H1 (cell line): ENCODE measurements at regions of chr6 and their contacts with region 1.

Region 1: GRCh38 chr6:27809939-27810767 is 102.0 kb downstream of the OR2B2 start:
- DNase-seq: peak in 1 of 2 experiments; percentile 78
- H3K4me3 ChIP-seq: peak overlapping the region; percentile 78 to 96 (median 89)
- H3K27ac ChIP-seq: peak overlapping the region; percentile 84
- H3K4me1 ChIP-seq: peaks cover 0 to 6% (median 3%) of the 10 kb centered on the region in 4 experiments; a peak in 4 of 7 replicates
- H3K27me3 ChIP-seq: no peaks in the 10 kb centered on the region
- CTCF ChIP-seq: peak in 1 of 3 experiments; percentile 6; a peak in 1 of 4 replicates
- EP300 ChIP-seq: no peak
- POLR2A ChIP-seq: peak; percentile 98 to 100
- RAD21 ChIP-seq: no peak

Region 2: GRCh38 chr6:26031595-26032339 is 1778.4 kb before region 1 on chr6:
- CTCF ChIA-PET with region 1: no interaction called
- POLR2A ChIA-PET with region 1: interaction called, 81 read pairs
- DNase-seq: peak; percentile 82 to 88
- H3K4me3 ChIP-seq: peak overlapping the region; percentile 81 to 95 (median 92)
- H3K27ac ChIP-seq: peak overlapping the region; percentile 96
- H3K4me1 ChIP-seq: peaks cover 2 to 18% (median 13%) of the 10 kb centered on the region in 4 experiments; a peak in 5 of 7 replicates
- H3K27me3 ChIP-seq: no peaks in the 10 kb centered on the region
- CTCF ChIP-seq: no peak
- EP300 ChIP-seq: peak in 1 of 2 experiments; percentile 2; a peak in 1 of 3 replicates
- POLR2A ChIP-seq: peak; percentile 99 to 100
- RAD21 ChIP-seq: no peak

Region 3: DNA sequence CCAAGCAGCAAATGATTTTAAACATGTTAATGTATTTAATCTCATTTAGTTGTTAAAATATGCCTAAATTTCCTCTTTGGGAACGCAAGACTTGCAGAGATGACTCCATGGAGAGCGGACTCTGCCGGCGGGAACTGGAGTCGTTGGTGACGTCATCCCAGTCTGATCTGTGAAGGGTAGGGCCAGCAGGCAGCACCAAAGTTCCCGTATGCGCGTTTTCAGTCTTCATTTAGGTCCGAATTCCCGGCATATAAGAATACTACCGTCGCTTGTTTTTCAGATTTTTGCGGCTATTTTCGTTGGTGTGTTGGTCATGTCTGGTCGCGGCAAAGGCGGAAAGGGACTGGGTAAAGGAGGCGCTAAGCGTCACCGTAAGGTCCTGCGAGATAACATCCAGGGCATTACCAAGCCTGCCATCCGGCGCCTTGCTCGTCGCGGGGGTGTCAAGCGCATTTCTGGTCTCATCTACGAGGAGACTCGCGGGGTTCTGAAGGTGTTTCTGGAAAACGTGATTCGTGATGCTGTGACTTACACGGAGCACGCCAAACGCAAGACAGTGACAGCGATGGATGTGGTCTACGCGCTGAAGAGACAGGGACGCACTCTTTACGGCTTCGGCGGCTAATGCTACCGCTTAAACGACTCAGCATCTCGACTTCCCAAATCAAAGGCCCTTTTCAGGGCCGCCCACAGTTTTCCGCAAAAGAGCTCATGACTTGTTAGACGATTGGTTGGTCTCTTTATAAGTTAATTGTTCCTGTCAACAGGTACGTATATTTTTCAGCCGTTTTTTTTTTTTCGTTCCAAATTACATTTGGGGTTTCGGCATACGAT is 1605.6 kb before region 1 on chr6:
- CTCF ChIA-PET with region 1: no interaction called
- POLR2A ChIA-PET with region 1: interaction called, 79 read pairs
- DNase-seq: peak; percentile 88 to 97
- H3K4me3 ChIP-seq: peak overlapping the region; percentile 64 to 94 (median 82)
- H3K27ac ChIP-seq: peak overlapping the region; percentile 98
- H3K4me1 ChIP-seq: peaks cover 0 to 15% (median 5%) of the 10 kb centered on the region in 4 experiments; a peak in 6 of 7 replicates
- H3K27me3 ChIP-seq: no peaks in the 10 kb centered on the region
- CTCF ChIP-seq: peak in 1 of 3 experiments; percentile 18; a peak in 1 of 4 replicates
- EP300 ChIP-seq: peak; percentile 13 to 95; a peak in 2 of 3 replicates
- POLR2A ChIP-seq: peak; percentile 99 to 100
- RAD21 ChIP-seq: 0 out of 4 replicates have a peak, but pooled peaks of 1 of the 2 experiments have one; percentile 14

Region 4: GRCh38 chr6:26234421-26235296 is 1575.5 kb before region 1 on chr6:
- CTCF ChIA-PET with region 1: no interaction called
- POLR2A ChIA-PET with region 1: interaction called, 12 read pairs
- DNase-seq: peak in 1 of 2 experiments; percentile 85
- H3K4me3 ChIP-seq: peak overlapping the region; percentile 83 to 91 (median 88)
- H3K27ac ChIP-seq: peak overlapping the region; percentile 93
- H3K4me1 ChIP-seq: peaks cover 0 to 3% (median 0%) of the 10 kb centered on the region in 4 experiments; a peak in 3 of 7 replicates
- H3K27me3 ChIP-seq: no peaks in the 10 kb centered on the region
- CTCF ChIP-seq: no peak
- EP300 ChIP-seq: no peak
- POLR2A ChIP-seq: peak; percentile 86
- RAD21 ChIP-seq: no peak

Region 5: GRCh38 chr6:27146706-27147505 is 663.2 kb before region 1 on chr6:
- CTCF ChIA-PET with region 1: interaction called, 3 read pairs
- POLR2A ChIA-PET with region 1: interaction called, 587 read pairs
- DNase-seq: peak; percentile 89 to 93
- H3K4me3 ChIP-seq: peak overlapping the region; percentile 60 to 86 (median 76)
- H3K27ac ChIP-seq: peak overlapping the region; percentile 98
- H3K4me1 ChIP-seq: peaks cover 0 to 11% (median 1%) of the 10 kb centered on the region in 4 experiments; a peak in 4 of 7 replicates
- H3K27me3 ChIP-seq: no peaks in the 10 kb centered on the region
- CTCF ChIP-seq: no peak
- EP300 ChIP-seq: 0 out of 3 replicates have a peak, but pooled peaks of 1 of the 2 experiments have one; percentile 16
- POLR2A ChIP-seq: peak; percentile 98 to 99
- RAD21 ChIP-seq: no peak

Region 6: DNA sequence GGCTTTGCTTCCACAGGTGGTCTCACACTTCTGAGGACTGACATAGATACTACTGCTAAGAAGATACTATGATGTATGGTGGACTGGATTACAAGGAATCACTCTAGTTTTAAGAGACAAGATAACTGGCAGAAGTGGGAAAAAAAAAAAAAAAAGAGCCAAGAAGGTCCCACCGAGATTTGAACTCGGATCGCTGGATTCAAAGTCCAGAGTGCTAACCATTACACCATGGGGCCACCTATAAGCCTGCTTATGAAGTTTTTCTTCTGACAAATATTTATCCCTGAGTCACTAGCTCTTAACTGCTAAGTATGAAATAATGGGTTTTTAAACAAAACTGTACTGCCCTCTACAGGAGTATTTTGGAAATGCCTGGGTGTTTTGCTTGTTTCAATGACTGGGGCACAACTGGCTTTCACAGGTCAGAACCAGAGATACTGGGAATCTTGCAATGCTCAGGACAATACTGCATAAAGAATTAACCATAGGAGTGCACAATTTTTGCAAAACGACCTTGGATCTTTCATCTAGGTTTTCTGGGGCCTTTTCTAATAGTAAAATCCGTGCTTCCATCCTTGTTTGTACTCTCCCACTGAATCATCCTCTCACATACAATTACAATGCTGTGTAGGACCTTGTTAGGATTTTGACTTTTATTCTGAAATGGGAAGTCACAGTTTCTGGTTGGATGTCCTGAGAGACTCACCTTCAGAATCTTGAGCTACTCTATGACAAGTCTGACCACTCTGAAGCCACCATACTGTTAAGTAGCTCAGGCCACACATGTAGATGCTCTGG is 14.3 kb before region 1 on chr6:
- CTCF ChIA-PET with region 1: interaction called, 12 read pairs
- POLR2A ChIA-PET with region 1: interaction called, 4 read pairs
- DNase-seq: peak in 1 of 2 experiments; percentile 75
- H3K4me3 ChIP-seq: peak overlapping the region in 1 of 4 experiments; percentile 37; a peak in 2 of 8 replicates
- H3K27ac ChIP-seq: no peak overlapping the region
- H3K4me1 ChIP-seq: peaks cover 0 to 5% (median 1%) of the 10 kb centered on the region in 4 experiments; a peak in 2 of 7 replicates
- H3K27me3 ChIP-seq: no peaks in the 10 kb centered on the region; a peak in 1 of 7 replicates
- CTCF ChIP-seq: peak in 2 of 3 experiments; percentile 44 to 71; a peak in 3 of 4 replicates
- EP300 ChIP-seq: no peak
- POLR2A ChIP-seq: no peak
- RAD21 ChIP-seq: peak; percentile 66 to 72

Region 7: DNA sequence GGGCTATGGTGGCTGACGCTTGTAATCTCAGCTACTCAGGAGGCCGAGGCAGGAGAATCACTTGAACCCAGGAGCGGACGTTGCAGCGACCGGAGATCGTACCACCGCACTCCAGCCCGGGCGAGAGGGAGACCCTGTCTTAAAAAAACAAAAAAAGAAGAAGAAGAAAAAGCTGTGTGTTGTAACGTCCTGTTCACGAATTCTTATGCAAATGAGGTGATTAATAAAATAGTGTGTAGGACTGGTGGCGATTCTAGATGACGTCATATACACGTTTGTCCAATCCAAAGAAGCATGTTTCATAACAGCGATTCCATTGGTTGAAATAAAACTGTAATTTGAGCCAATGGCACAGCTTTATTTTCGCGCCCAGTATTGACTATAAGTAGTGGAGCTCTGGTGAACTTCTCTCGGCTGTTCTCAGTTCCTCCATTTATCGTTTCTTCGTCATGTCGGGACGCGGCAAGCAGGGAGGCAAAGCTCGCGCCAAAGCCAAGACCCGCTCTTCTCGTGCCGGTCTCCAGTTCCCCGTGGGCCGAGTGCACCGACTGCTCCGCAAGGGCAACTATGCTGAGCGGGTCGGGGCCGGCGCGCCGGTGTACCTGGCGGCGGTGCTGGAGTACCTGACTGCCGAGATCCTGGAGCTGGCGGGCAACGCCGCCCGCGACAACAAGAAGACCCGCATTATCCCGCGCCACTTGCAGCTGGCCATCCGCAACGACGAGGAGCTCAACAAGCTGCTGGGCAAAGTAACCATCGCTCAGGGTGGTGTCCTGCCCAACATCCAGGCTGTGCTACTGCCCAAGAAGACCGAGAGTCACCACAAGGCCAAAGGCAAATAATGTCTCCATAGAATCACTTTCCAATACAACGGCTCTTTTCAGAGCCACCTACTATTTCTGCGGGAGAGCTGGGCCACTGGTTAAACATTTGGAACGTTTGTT is 55.0 kb after region 1 on chr6:
- CTCF ChIA-PET with region 1: no interaction called
- POLR2A ChIA-PET with region 1: interaction called, 959 read pairs
- DNase-seq: peak in 1 of 2 experiments; percentile 86
- H3K4me3 ChIP-seq: peak overlapping the region; percentile 61 to 86 (median 79)
- H3K27ac ChIP-seq: peak overlapping the region; percentile 90
- H3K4me1 ChIP-seq: peaks cover 0 to 5% (median 1%) of the 10 kb centered on the region in 4 experiments; a peak in 2 of 7 replicates
- H3K27me3 ChIP-seq: no peaks in the 10 kb centered on the region
- CTCF ChIP-seq: no peak
- EP300 ChIP-seq: no peak
- POLR2A ChIP-seq: peak; percentile 93 to 97
- RAD21 ChIP-seq: no peak; a peak in 1 of 4 replicates